ENCODE measurements at regions of chr16 and their contacts with region 1.

Region 1: DNA sequence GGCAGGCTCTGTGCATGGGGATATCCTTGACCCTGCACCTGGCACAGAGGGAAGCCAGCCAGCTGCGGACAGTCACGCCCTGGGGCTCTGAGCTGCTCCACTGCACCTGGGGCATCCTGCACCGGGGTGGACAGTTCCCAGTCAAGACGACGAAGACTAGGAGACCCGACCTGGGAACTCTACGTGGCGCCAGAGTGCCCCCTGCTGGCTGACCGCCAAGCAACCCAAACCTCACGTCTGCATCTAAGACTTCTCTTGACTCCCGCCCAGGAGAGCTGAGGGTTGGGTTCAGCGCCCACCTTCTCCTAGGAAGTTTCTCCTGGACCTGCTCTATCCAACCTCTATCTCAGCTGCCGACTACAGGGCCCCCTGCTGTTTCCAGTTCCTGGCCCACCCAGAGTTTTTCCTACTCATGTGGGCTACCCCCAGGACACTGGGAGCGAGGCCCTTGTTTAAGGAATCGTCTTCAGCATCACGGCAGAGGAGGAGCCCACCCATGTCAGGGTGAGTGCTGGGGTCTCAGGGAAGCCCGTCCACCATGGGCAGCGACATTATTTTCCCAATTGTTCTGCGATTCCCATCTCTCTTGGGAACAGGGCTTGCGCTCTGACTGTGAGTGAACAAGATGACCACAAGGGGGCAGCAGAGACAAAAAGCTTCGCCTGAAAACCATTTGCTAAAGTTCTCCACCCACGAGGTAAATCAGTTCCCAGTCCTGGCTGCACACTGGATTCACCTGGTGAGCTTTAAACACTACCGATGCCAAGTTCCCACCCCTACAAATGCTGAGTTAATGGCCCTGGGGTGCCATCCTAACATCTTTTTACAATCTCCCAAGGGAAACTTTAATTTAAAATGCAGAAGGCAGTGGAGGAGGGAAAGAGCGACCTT is 29.3 kb downstream of the TLE7 start:
- DNase-seq: peak; percentile 59
- ATAC-seq: peak; percentile 92
- H3K4me3 ChIP-seq: no peak overlapping the region
- H3K27ac ChIP-seq: no peak overlapping the region
- H3K4me1 ChIP-seq: no peaks in the 10 kb centered on the region
- H3K27me3 ChIP-seq: peaks cover 10% of the 10 kb centered on the region
- CTCF ChIP-seq: peak; percentile 91
- POLR2A ChIP-seq: no peak
- RAD21 ChIP-seq: peak; percentile 80

Region 2: DNA sequence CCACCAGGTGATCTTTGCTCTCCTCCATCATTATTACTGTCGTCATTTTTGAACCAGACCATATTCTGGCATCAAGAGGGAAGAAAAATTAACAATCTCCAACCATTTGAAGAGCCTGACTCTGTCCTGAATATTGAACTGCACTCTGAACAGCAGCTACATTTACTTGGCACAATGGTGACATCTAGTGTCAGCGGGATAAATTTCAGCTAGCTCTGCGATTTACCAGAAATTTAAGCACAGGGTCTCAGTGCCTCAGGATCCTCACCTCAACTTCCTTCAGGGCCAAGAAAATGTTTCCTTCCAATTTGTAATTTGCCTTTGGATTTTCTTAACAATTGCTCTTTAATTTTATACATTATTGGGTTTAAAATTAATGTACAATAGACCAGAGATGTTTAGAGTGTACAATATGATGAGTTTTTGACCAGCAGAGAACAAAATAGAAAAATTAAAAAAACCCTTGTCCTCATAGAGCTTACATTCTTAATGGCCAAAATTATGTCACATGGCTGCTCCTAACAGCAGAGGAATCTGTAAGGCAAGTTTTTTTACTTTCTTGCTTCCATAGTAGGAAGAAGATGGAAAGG is 87.4 kb after region 1 on chr16:
- CTCF ChIA-PET with region 1: interaction called, 40 read pairs
- POLR2A ChIA-PET with region 1: interaction called, 3 read pairs
- dilution Hi-C with region 1: no loop called
- in situ Hi-C with region 1: loop called (anchors 5 kb)
- intact Hi-C with region 1: loop called (anchors 1 kb)
- DNase-seq: peak; percentile 66
- ATAC-seq: peak; percentile 97
- H3K4me3 ChIP-seq: no peak overlapping the region
- H3K27ac ChIP-seq: no peak overlapping the region
- H3K4me1 ChIP-seq: no peaks in the 10 kb centered on the region
- H3K27me3 ChIP-seq: no peaks in the 10 kb centered on the region; the same call in none of the 2 replicates
- CTCF ChIP-seq: peak; percentile 82
- POLR2A ChIP-seq: no peak
- RAD21 ChIP-seq: peak; percentile 89

Region 3: DNA sequence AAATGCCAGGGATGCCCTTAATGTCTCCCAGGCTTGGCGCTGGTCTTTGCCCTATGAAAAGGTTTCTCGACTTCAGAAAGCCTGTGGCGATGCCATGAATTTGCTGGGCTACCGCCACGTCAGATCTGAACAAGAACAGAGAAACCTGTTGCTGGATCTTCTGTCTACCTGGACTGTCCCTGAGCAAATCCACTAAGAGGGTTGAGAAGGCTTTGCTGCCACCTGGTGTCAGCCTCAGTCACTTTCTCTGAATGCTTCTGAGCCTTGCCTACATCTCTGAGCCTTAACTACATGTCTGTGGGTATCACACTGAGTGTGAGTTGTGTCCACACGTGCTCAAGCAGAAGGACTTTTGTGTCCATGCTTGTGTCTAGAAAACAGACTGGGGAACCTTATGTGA is 125.1 kb after region 1 on chr16:
- CTCF ChIA-PET with region 1: interaction called, 3 read pairs
- POLR2A ChIA-PET with region 1: no interaction called
- dilution Hi-C with region 1: no loop called
- in situ Hi-C with region 1: no loop called
- intact Hi-C with region 1: loop called (anchors 1 kb)
- DNase-seq: peak; percentile 41
- ATAC-seq: peak; percentile 87
- H3K4me3 ChIP-seq: no peak overlapping the region
- H3K27ac ChIP-seq: no peak overlapping the region
- H3K4me1 ChIP-seq: no peaks in the 10 kb centered on the region
- H3K27me3 ChIP-seq: no peaks in the 10 kb centered on the region
- CTCF ChIP-seq: peak; percentile 49
- POLR2A ChIP-seq: no peak
- RAD21 ChIP-seq: peak; percentile 50

Region 4: GRCh38 chr16:71564155-71564967 is 151.8 kb after region 1 on chr16:
- CTCF ChIA-PET with region 1: no interaction called
- POLR2A ChIA-PET with region 1: no interaction called
- dilution Hi-C with region 1: no loop called
- in situ Hi-C with region 1: no loop called
- intact Hi-C with region 1: no loop called
- DNase-seq: no peak
- ATAC-seq: no peak
- H3K4me3 ChIP-seq: peak overlapping the region; percentile 48
- H3K27ac ChIP-seq: no peak overlapping the region
- H3K4me1 ChIP-seq: no peaks in the 10 kb centered on the region
- H3K27me3 ChIP-seq: no peaks in the 10 kb centered on the region; the same call in 1 of the 2 replicates
- CTCF ChIP-seq: no peak
- POLR2A ChIP-seq: no peak
- RAD21 ChIP-seq: no peak

Region 5: GRCh38 chr16:71610936-71611871 is 198.7 kb after region 1 on chr16:
- CTCF ChIA-PET with region 1: interaction called, 3 read pairs
- POLR2A ChIA-PET with region 1: no interaction called
- dilution Hi-C with region 1: no loop called
- in situ Hi-C with region 1: no loop called
- intact Hi-C with region 1: loop called (anchors 1 kb)
- DNase-seq: peak; percentile 37
- ATAC-seq: peak; percentile 98
- H3K4me3 ChIP-seq: no peak overlapping the region
- H3K27ac ChIP-seq: no peak overlapping the region
- H3K4me1 ChIP-seq: no peaks in the 10 kb centered on the region
- H3K27me3 ChIP-seq: peaks cover 8% of the 10 kb centered on the region
- CTCF ChIP-seq: peak; percentile 85
- POLR2A ChIP-seq: no peak
- RAD21 ChIP-seq: peak; percentile 65